HepG2 (cell line): ENCODE measurements at regions of chr18 and their contacts with region 1.

Region 1: DNA sequence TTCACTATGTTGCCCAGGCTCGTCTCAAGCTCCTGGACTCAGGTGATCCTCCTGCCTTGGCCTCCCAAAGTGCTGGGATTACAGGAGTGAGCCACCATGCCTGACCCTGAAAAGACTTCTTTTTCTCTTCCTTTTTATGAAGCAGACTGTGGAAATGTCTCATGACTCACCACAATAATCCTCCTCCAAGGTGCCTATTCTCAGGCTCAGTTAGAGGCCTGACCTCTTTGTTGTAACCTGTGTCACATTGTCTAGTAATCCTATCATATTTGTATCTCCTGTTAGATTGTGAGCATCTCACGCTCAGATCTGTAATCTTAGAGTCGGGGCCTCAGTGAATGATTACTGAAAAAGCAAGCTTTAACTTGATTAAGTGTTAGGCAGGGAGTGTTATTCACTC is 18.3 kb upstream of the TAF4B start:
- DNase-seq: no peak
- ATAC-seq: no peak
- H3K4me3 ChIP-seq: no peak overlapping the region
- H3K27ac ChIP-seq: no peak overlapping the region
- H3K4me1 ChIP-seq: no peaks in the 10 kb centered on the region
- H3K27me3 ChIP-seq: no peaks in the 10 kb centered on the region; a peak in 1 of 5 replicates
- CTCF ChIP-seq: no peak
- EP300 ChIP-seq: no peak
- POLR2A ChIP-seq: no peak
- RAD21 ChIP-seq: no peak

Region 2: DNA sequence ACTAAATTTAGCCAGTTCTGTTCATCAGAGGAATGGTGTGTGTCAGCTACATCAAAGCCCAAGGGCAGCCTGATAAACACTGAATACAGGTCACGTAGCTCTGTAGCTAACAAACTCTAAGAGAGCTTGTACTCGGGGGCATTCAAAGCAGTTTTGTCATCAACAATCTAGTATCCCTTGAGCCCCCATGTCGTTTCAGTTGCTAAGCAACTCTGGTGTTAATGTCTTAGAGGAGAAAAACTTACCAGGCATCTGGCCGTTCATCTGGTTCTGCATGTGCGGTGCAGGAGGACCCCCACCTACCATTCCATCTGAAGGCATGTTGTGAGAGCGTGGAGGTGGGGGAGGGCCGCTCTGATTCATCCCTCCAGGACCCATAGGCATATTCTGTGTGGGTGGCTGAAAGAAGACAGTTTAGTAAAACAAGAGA is 150.6 kb before region 1 on chr18:
- CTCF ChIA-PET with region 1: no interaction called
- POLR2A ChIA-PET with region 1: no interaction called
- in situ Hi-C with region 1: no loop called
- intact Hi-C with region 1: no loop called
- DNase-seq: no peak
- ATAC-seq: no peak
- H3K4me3 ChIP-seq: no peak overlapping the region
- H3K27ac ChIP-seq: no peak overlapping the region
- H3K4me1 ChIP-seq: no peaks in the 10 kb centered on the region
- H3K27me3 ChIP-seq: no peaks in the 10 kb centered on the region
- CTCF ChIP-seq: no peak
- EP300 ChIP-seq: no peak
- POLR2A ChIP-seq: no peak
- RAD21 ChIP-seq: no peak

Region 3: DNA sequence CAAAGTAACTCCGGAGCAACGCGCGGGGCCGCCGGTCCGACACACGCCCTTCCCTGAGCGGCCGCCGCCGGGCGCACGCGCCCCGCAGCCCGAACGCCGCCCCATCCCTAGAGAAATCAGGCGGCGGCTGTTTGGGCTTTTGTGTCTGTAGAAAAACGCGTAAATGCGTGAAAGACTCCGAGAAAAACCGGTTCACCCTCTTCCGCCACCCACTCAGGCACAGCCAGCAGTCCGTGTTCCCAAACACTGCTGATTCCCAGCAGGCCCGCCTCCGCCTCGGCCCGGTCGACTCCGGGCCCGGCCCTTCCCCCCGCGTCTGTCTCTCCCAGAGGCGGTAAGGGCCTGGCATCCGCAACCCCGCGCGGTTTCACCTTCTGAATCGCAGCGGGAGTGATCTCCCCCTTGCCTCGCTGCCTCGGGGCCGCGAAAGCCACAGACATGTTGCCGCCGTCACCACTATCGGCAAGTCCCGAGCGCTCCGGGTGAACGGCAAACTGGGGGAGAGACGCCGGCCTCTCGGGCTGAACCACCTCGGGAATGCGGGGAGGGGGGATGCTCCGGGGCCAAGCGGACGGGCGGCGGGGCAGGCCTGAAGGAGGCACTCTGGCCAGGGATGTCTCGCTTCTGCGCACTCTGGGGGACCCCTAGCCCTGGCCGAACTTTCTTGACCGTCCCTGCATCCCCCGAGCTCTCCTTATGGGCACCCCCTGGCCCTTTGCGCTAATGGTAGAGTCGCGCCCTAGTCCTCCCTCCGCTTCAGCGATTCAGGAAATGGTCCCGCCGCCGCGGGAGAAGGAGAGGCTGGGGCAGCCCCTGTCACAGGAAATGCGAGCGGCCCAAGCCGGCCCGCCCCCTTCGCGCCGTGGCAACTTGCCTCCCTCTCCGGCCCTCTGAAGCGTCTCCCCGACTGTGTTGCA is 117.5 kb before region 1 on chr18 and contains the start of gene SS18:
- CTCF ChIA-PET with region 1: no interaction called
- POLR2A ChIA-PET with region 1: no interaction called
- in situ Hi-C with region 1: no loop called
- intact Hi-C with region 1: loop called (anchors 10 kb)
- DNase-seq: peak; percentile 85
- ATAC-seq: peak; percentile 92
- H3K4me3 ChIP-seq: peak within 1 kb of the TSS; percentile 74 to 85 (median 75)
- H3K27ac ChIP-seq: peak within 1 kb of the TSS; percentile 85
- H3K4me1 ChIP-seq: peaks cover 19% of the 10 kb centered on the region
- H3K27me3 ChIP-seq: peaks cover 0 to 3% of the 10 kb centered on the region in 2 experiments; a peak in 1 of 5 replicates
- CTCF ChIP-seq: no peak; the same call in 1 of the 2 replicates
- EP300 ChIP-seq: no peak
- POLR2A ChIP-seq: peak; percentile 72 to 83
- RAD21 ChIP-seq: peak; percentile 8; the same call in 1 of the 2 replicates
- total RNA-seq, gene SS18: 49.2 and 61.4 TPM in 2 replicates

Region 4: DNA sequence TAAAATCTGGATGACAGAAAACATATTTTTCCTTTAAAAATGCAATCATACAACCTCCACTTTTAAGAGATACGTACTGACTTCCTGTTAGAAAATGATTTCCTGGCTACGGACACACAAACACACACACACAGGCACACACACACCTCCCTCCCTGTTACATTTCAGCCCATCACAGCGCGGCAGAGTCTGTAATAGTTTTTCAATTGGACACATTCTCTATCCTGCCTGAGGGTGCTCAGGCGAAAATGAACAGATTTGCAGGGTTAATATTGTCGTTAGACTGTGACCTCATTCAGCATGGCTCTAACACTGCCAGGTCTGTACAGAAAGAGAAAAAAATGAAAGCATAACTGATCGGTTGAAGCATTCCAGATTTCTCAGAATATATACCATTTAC is 295.4 kb after region 1 on chr18:
- CTCF ChIA-PET with region 1: no interaction called
- POLR2A ChIA-PET with region 1: no interaction called
- in situ Hi-C with region 1: no loop called
- intact Hi-C with region 1: no loop called
- DNase-seq: no peak
- ATAC-seq: no peak
- H3K4me3 ChIP-seq: no peak overlapping the region
- H3K27ac ChIP-seq: no peak overlapping the region
- H3K4me1 ChIP-seq: peaks cover 16% of the 10 kb centered on the region
- H3K27me3 ChIP-seq: no peaks in the 10 kb centered on the region; a peak in 1 of 5 replicates
- CTCF ChIP-seq: no peak
- EP300 ChIP-seq: no peak
- POLR2A ChIP-seq: no peak
- RAD21 ChIP-seq: no peak